Aorta (tissue), 5 donors: ENCODE measurements at regions of chr12 and their contacts with region 1.

Region 1: GRCh38 chr12:6607751-6608591 is 792 bp upstream of the CHD4 start:
- DNase-seq: no peak
- ATAC-seq: peak; percentile 24
- H3K4me3 ChIP-seq: no peak overlapping the region
- H3K27ac ChIP-seq: peak overlapping the region in 1 of 2 donors; percentile 54
- H3K4me1 ChIP-seq: peaks cover 2 to 3% of the 10 kb centered on the region in 2 donors
- H3K27me3 ChIP-seq: no peaks in the 10 kb centered on the region

Region 2: DNA sequence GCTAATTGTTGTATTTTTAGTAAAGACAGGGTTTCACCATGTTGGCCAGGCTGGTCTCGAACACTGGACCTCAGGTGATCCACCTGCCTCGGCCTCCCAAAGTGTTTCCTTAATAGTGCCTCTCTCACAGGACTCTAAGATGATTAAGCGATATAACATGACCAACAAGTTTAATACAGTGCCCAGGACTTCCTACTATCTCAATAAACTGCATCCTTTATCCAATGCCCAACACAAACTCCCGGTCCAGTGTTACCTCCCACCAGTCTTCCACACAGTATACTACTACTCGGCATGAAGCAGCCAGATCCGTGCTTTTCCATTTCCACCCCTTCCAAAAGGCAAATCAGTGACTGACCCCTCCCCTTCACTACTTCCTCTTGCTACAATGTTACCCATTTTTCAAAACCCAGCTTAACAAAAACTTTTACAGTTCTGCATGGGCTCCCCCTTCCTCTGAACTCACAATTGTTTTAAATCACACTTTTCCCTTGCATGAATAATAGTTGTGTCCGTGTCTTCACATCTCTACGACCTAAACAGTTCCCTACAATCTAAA is 40.8 kb before region 1 on chr12:
- intact Hi-C with region 1: loop called (anchors 5 kb)
- DNase-seq: no peak
- ATAC-seq: no peak
- H3K4me3 ChIP-seq: peak overlapping the region; percentile 15 to 36
- H3K27ac ChIP-seq: no peak overlapping the region
- H3K4me1 ChIP-seq: no peaks in the 10 kb centered on the region
- H3K27me3 ChIP-seq: no peaks in the 10 kb centered on the region